ENCODE measurements at regions of chr1 and their contacts with region 1.

Region 1: DNA sequence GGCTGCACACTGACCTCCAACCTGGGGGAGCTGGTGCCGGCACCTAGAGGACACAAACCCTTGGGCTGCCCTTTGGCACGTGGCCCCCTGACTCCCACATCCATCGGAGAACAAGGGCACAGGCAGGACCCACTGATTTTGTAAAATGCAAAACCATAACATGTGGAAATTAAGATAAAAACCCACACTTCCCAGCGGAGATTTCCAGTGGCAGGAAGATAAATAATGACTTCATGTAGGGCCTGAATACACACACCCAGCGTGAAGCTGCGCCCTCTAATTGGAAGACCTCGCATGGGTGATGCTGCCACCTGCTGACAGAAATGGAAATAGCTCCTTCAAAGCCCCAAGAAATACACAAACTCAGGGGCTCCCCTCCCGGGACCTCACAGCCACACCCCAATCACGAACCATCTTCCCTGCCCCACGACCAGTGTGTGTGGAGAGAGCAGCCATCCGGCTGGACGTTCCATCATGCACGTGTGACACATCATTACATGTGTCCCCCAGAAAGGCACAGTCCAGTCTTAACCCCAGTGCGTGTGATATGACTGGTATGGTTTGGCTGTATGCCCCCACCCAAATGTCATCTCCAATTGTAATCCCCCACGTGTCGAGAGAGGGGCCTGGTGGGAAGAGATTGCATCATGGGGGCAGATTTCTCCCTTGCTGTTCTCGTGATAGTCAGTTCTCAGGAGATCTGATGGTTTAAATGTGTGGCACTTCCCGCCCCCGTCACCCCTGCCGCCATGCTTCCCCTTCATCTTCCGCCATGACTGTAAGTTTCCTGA is 5.7 kb upstream of the TPRG1L start:
- DNase-seq: peak in 7 of 10 donors; percentile 52 to 94 (median 70)

Region 2: DNA sequence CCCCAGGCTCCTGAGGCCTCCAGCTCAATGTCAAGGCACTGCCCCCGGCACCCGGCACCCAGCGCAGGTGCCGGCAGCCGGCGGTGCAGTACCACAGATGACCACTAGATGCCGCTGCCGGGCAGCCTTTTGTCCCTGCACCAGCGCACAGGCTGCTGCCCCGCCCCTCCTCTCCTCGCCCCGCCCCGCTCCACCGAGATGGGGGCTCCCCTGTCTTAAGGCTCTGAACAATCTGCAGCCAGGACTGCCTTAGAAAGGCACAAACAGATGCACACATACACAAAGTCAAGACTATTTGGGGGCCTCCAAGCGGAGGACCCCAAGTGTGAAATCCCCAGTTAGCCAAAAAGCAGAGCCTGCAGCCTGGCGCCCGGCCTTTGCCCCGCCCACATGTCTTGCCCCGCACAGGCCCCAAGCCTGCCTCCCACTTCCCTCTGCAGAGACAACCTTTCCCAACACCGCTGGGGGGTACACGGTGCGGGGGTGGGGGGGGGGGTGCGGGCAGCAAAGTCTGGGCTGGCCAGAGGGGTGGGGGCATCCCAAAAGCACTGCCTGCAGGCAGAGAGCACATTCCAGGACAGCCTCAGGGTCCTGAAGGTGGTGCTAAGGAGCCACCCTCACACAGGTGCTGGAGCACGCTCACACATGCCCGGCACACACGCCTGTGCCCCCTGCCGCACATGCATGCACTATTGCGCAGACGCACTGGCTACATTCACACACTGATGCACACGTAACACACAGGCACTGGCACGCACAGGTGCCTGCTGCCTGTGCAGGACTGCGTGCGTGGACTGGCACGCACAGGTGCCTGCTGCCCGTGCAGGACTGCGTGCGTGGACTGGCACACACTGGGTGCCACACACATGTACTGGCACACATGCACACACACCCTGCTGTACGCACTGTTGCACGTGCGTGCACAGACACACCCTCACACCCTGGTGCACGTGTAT is 127.5 kb before region 1 on chr1:
- intact Hi-C with region 1: loop called (anchors 1 kb)
- DNase-seq: peak; percentile 64 to 97 (median 78)

Region 3: DNA sequence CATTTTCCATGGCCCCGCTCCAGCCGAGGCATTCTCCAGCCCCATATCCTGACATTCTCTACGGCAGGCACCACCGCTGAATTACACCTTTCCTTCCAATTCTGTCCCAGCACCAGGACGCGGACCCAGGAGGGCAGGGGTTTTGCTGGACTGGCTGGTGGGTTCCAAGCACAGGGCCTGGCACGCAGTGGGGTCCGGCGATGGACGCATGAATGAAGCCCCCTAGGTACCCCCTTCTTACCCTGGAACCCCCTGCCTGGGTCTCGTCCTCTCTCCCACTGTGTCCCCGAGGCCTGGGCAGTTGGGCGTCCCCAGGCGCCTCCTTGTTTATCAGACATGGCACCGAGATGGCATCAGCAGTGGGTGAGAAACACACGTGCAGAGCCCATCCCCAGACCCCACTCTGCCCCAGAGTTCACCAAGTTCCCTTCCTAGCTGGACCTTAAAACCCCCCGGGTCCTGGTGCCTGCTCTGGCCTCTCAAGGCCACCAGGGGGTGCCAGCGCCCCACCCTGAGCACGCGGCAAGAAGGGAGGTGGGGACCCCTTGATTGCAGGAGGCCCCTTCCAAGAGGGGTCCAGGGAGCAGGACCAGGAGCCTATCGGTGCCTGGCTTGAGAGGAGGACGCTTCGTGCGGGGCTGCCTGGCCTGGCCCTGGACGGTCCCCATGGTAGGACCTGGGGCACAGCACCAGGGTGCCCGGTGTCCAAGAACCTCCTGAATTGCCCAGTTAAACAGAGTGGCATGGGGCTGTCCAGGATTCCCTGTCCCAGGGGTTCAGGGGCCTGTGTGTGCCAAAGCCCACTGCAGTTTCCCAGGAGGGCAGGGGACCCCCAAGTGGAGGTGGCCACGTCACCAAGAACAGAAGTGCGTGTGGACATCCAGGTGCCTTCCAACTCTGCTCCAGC is 53.9 kb before region 1 on chr1:
- intact Hi-C with region 1: loop called (anchors 1 kb)
- DNase-seq: peak in 4 of 10 donors; percentile 22 to 91 (median 36)

Measured in posterior cingulate gyrus (tissue), 11 donors.